Activated CD8-positive, alpha-beta T cell treated with anti-CD3 and anti-CD28 coated beads, Interleukin-2, amount 10 ng/mL, durations not matched to agents 7 days and 5 days (primary cell): ENCODE measurements at regions of chr18 and their contacts with region 1.

Region 1: DNA sequence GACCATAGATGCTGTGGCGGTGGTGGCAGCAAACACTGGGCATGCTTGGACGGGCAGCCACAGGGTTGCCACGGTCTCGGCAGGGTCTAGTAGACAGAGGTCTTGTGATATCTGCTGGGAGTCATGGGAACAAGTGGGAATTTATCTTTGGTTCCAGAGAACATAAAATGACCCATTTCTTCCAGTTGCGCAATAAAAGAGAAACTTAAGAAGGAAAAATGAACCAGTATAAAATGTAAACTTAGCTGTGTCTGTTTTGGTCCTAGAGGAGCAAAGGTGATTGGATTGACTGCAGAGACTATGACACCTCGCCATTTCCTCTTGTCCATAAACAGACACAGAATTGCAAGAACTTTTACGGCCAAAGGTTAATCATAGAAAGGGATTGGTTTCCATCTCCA is 132.6 kb upstream of the RBBP8 start:
- DNase-seq: no peak
- ATAC-seq: no peak
- H3K4me3 Mint-ChIP-seq: no peak overlapping the region
- H3K27ac Mint-ChIP-seq: no peak overlapping the region
- H3K4me1 Mint-ChIP-seq: no peaks in the 10 kb centered on the region
- H3K27me3 Mint-ChIP-seq: peaks cover 18% of the 10 kb centered on the region

Region 2: DNA sequence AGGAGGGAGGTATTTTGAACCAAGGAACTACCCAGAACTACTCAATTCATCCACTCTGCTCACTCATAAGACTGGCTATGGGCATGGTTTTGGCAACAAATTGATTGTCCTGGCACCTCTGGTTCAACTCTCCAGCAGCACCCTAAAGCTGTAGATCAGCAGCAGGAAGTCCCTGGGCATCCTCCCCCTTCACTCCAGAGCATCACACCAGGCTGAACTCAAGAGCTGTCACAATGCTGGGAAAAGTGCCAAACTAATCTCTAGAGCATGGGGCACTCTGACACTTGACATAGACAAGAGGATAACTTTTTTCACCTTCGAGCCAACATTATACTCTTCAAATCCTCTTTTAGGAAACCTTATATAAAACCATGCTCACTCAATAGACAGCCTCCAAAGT is 21.6 kb before region 1 on chr18:
- CTCF ChIA-PET with region 1: interaction called, 11 read pairs
- POLR2A ChIA-PET with region 1: no interaction called
- DNase-seq: no peak
- ATAC-seq: no peak
- H3K4me3 Mint-ChIP-seq: no peak overlapping the region
- H3K27ac Mint-ChIP-seq: no peak overlapping the region
- H3K4me1 Mint-ChIP-seq: no peaks in the 10 kb centered on the region
- H3K27me3 Mint-ChIP-seq: peaks cover 36% of the 10 kb centered on the region

Region 3: DNA sequence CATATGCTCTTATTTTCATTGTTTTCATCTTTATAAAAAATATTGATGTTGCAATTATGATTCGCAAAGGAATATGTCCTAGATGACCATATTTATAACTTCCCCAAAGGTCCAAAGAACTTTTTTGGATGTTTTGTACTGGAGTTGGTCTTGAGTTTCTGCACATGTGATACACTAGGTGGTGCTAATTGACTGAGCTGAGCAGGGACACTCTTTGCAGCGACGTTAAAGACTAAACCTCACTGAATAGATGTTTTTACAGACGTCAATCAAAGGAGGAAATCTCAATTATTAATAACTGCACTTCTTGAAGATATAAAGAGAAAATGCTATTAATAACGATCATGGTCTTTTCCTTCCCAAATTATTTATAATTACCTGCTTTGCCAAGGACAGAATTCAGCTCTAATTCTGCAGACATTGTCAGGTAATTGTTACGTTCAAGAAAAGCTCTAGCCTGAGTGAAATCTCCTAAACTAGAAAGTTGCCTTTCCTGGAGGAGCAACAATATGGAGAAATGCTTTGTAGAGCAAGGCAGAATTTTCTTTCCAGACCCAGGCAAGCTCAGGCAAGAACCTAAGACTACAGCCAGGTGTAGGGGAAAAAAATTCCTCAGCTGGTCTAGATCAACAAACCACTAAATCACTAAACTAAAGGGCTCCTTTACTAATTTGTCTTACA is 13.2 kb after region 1 on chr18:
- CTCF ChIA-PET with region 1: interaction called, 17 read pairs
- POLR2A ChIA-PET with region 1: no interaction called
- DNase-seq: no peak
- ATAC-seq: no peak
- H3K4me3 Mint-ChIP-seq: no peak overlapping the region
- H3K27ac Mint-ChIP-seq: no peak overlapping the region
- H3K4me1 Mint-ChIP-seq: no peaks in the 10 kb centered on the region
- H3K27me3 Mint-ChIP-seq: peaks cover 27% of the 10 kb centered on the region

Region 4: DNA sequence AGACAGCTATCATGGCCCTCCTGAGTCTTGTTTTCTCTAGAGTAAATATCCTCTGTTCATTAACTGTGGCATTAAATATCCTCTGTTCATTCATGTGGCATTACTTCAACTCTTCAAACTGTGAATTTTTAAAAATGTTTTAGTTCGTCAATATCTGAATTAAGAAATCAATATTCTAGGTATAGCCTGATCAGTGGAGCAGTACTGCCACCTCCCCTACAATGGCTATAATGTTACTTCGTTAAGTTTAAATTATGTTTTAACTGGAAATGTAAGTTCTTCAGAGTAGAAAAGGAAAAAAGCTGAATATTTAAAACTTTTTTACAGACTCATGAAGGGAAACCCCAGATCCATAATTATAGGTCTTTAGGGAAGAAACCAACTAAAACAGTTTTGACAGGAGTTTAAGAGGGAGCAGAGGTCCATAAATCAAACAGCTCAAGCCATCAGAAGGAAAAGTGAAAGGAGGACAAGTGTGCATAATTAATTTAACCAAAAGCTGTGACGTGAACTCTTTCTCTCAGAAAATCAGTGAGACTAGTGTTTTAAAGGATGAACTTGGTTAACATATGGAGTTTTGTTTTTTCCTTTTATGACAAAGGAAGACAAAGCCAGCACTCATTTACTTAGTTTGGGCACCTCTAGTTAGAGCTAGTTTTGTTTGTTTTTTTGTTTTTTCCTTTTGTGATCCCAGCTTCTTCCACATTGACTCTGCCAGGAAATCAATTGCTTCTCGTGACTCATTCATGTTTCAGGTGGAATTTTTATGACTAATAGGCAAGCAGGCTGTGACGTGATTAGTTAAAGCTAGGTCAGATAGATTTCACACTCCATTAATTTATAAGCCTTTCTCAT is 177.5 kb after region 1 on chr18:
- CTCF ChIA-PET with region 1: interaction called, 10 read pairs
- POLR2A ChIA-PET with region 1: no interaction called
- DNase-seq: no peak
- ATAC-seq: no peak
- H3K4me3 Mint-ChIP-seq: no peak overlapping the region
- H3K27ac Mint-ChIP-seq: peak overlapping the region; percentile 43
- H3K4me1 Mint-ChIP-seq: peaks cover 7% of the 10 kb centered on the region
- H3K27me3 Mint-ChIP-seq: no peaks in the 10 kb centered on the region

Region 5: DNA sequence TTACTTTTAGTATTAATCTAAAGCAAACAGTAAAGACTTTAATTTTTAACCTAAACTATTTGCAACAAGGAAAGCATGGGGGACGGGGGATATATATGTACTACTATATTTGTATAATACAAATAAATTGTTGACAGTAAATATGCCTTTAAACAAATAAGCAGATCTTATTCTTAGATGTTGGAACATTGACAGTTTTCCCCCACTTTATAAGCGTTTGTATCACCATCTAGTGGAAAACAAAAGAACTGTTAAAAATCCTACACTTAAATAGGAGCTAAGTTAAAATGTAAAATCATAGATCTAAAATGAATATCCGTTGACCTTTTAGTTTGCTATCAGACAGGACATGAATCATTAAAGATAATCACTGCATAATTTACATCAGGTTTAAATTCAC is 182.6 kb after region 1 on chr18:
- CTCF ChIA-PET with region 1: interaction called, 10 read pairs
- POLR2A ChIA-PET with region 1: no interaction called
- DNase-seq: no peak
- ATAC-seq: no peak
- H3K4me3 Mint-ChIP-seq: no peak overlapping the region
- H3K27ac Mint-ChIP-seq: no peak overlapping the region
- H3K4me1 Mint-ChIP-seq: peaks cover 3% of the 10 kb centered on the region
- H3K27me3 Mint-ChIP-seq: no peaks in the 10 kb centered on the region